ENCODE measurements at regions of chr5 and their contacts with region 1.

Region 1: DNA sequence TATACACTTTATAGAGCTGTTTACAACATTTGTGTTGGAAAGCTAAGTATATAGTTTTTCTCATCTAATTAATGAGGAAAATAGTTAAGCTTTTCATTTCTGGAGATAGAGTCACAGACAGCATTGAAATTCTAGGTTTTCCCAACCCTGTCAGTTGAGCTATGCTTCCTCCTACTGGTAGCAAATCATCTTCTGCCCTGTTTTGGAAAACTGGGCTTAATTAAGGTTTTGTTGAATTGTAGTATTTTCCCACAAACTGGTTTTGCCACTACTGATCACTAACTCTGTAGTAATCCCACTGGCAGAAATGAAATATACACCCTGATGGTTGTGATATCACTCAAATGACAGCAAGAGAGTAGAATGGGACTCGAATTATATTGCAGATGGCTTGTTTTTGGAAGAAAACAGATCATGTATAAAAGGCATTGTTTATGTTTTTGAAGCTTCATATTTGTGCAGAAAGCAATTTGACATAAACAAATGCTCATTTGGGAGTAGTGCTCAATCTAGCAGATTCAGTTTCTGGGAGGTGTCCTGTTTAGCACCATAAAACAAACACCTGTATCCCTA is 46.6 kb downstream of the CD180 start:
- DNase-seq: no peak
- H3K4me3 ChIP-seq: no peak overlapping the region
- H3K27ac ChIP-seq: no peak overlapping the region
- H3K4me1 ChIP-seq: peaks cover 5% of the 10 kb centered on the region
- H3K27me3 ChIP-seq: no peaks in the 10 kb centered on the region
- CTCF ChIP-seq: peak; percentile 59

Region 2: GRCh38 chr5:66807743-66808142 is 342.3 kb before region 1 on chr5:
- CTCF ChIA-PET with region 1: no interaction called
- POLR2A ChIA-PET with region 1: no interaction called
- intact Hi-C with region 1: loop called (anchors 10 kb)
- DNase-seq: peak; percentile 51
- H3K4me3 ChIP-seq: no peak overlapping the region
- H3K27ac ChIP-seq: no peak overlapping the region
- H3K4me1 ChIP-seq: no peaks in the 10 kb centered on the region
- H3K27me3 ChIP-seq: peaks cover 11% of the 10 kb centered on the region
- CTCF ChIP-seq: peak; percentile 50

Region 3: GRCh38 chr5:66987949-66988838 is 161.8 kb before region 1 on chr5:
- CTCF ChIA-PET with region 1: no interaction called
- POLR2A ChIA-PET with region 1: no interaction called
- intact Hi-C with region 1: loop called (anchors 2 kb)
- DNase-seq: peak; percentile 61
- H3K4me3 ChIP-seq: no peak overlapping the region
- H3K27ac ChIP-seq: no peak overlapping the region
- H3K4me1 ChIP-seq: no peaks in the 10 kb centered on the region
- H3K27me3 ChIP-seq: no peaks in the 10 kb centered on the region
- CTCF ChIP-seq: peak; percentile 77

Region 4: DNA sequence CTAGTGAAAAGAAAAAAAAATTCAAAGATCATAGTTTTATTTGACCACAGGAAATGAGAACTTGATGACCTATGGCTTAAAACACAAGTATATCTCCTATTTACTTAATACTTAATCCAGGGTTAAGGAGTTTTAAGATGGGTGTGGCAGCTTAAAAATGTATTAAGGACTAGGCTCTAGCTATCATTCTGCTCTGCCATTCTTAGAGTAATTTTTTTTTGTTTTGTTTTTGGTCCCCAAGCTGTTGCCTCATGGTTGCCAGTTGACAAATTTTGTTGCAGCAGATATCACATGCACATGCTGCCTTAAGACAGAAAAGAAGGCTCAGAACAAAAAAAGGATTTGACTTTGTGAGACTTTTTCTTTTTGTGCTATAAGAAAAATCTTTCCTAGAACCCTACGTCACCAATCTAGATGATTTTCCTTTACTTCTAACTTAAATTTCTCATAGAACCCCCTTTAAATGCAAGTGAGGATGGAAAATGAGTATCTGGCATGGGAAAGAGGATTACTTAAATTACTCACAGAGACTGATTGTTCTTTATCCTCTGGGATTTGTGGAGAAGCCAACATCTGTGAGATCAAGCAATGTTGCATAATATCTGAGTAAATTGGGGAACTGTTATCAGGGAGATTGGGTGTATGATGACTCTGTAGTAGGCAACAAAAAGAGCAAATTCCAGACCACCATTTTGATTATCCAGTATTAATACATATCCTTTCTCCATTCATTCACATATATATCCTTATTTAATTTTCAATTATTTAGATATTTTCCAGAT is 411.3 kb after region 1 on chr5:
- CTCF ChIA-PET with region 1: no interaction called
- POLR2A ChIA-PET with region 1: no interaction called
- intact Hi-C with region 1: no loop called
- DNase-seq: peak; percentile 18
- H3K4me3 ChIP-seq: no peak overlapping the region
- H3K27ac ChIP-seq: no peak overlapping the region
- H3K4me1 ChIP-seq: no peaks in the 10 kb centered on the region
- H3K27me3 ChIP-seq: no peaks in the 10 kb centered on the region
- CTCF ChIP-seq: no peak

Measured in A673 (cell line).